Posterior vena cava (tissue), 2 donors: ENCODE measurements at regions of chr18 and their contacts with region 1.

Region 1: DNA sequence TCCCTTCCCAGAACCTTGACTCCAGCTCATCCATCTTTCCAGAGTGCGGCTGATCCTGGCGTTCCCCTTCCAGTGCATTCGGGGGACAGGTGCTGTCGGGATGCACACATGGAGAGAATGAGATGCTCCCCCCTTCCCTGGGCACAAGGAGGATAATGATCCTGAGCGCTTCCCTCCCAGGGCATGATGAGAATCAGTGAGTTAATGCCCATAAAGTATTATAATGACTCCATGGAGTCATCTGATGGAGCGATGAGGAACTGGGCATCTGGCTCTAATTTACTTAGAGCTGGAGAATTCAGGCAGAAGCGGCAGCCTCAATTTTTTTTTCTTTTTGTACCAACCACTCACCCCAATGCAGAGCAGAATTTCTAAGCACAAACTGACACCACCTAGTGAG is 79.6 kb upstream of the SKOR2 start:
- DNase-seq: no peak

Region 2: DNA sequence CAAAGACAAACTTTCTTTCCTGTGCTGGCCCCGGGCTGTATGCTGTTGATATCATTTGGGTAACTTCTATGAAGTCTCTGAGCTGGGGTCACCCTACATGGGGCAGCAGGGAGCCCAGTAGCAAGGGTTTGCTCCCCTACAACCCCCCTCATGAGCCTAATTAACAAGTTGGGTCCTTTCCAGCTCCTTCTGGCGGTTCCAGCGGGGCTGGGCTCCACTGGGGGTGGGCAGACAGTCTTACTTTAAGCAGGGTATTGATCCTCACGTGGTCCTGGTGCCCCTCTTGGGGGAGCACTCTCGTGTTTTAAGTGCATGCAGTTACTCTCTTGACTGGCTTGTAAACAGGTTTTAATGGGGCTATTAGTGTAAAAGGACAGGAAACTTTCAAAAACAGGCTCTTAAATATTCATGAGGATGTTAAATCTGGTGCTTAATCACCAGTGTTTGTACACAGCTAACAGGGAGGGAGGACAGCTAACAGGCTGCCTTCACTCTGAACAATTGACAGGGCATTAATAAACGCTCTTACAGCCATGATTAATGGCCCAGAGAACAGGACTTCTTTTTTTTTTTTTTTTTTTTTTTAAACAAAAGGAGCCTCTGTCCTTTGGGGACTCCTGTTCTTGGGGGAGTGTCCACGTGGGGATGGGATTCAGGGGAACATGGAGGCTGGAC is 43.0 kb before region 1 on chr18:
- intact Hi-C with region 1: loop called in 1 of 2 experiments (anchors 1 kb)
- DNase-seq: no peak